Psoas muscle (tissue), 8 donors: ENCODE measurements at regions of chr18 and their contacts with region 1.

Region 1: DNA sequence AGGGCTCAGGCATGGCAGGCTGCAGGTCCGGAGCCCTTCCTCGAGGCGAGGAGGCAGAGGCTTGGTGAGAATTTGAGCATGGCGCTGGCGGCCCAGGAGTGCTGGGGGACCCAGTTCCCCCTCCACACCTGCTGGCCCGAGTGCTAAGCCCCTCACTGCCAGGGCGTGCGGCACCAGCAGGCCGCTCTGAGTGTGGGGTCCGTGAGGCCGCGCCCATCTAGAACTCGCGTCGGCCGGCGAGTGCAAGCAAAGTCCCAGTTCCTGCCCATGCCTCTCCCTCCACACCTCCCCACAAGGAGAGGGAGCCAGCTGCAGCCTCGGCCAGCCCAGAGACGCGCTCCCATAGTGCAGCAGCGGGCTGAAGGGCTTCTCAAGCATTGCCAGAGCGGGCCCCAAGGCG is 233.0 kb downstream of the PIEZO2 start:
- DNase-seq: no peak
- ATAC-seq: no peak
- H3K4me3 ChIP-seq: no peak overlapping the region
- H3K27ac ChIP-seq: no peak overlapping the region
- H3K4me1 ChIP-seq: no peaks in the 10 kb centered on the region
- H3K27me3 ChIP-seq: peaks cover 0 to 3% (median 0%) of the 10 kb centered on the region in 3 donors
- CTCF ChIP-seq: no peak

Region 2: GRCh38 chr18:10965119-10965518 is 48.7 kb after region 1 on chr18:
- intact Hi-C with region 1: loop called in 1 of 2 experiments (anchors 5 kb)
- DNase-seq: no peak
- ATAC-seq: no peak
- H3K4me3 ChIP-seq: no peak overlapping the region
- H3K27ac ChIP-seq: no peak overlapping the region
- H3K4me1 ChIP-seq: no peaks in the 10 kb centered on the region
- H3K27me3 ChIP-seq: no peaks in the 10 kb centered on the region
- CTCF ChIP-seq: no peak

Region 3: GRCh38 chr18:11577271-11578112 is 661.1 kb after region 1 on chr18:
- intact Hi-C with region 1: no loop called
- DNase-seq: no peak
- ATAC-seq: no peak
- H3K4me3 ChIP-seq: no peak overlapping the region
- H3K27ac ChIP-seq: no peak overlapping the region
- H3K4me1 ChIP-seq: no peaks in the 10 kb centered on the region
- H3K27me3 ChIP-seq: no peaks in the 10 kb centered on the region
- CTCF ChIP-seq: no peak